CD4-positive, alpha-beta T cell (primary cell): ENCODE measurements at regions of chr1 and their contacts with region 1.

Region 1: DNA sequence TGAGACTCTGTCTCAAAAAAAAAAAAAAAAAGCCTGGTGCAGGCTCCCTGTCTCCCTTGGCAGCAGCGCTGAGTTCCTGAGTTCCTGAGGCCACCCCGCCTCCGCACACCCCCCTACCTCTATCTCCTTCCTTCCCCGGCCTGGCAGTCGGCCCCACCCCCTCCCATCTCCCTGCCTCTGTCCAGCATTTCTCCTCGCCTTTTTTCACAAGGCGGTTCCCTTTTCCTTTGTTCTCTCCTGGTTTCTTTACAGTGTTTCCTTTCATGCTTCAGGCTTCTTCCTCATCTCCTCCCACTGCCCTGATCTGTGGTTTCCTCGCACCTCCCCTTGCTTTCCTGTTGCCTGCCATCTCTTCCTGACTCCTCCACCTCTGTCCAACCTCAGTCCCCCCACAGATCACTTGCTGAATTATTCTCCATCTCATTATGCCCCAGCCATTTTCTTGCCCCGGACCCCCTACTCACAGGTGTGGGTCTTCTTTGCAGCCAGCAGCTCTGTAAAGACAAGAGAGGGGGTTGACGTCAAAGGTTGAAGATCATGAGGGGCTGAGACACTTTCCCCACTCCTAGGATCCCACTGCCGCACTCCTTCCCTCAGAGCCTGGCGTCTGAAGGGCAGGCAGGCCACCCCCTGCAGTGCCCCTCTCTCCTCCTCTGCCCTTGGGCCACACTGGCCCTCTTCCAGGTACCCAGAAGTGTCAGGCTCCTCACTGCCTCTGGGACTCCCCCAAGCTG is 2.5 kb downstream of the RORC start:
- DNase-seq: peak in 1 of 14 experiments; percentile 37
- ATAC-seq: no peak
- H3K4me3 ChIP-seq: no peak overlapping the region
- H3K4me3 Mint-ChIP-seq: peak overlapping the region; percentile 59
- H3K27ac ChIP-seq: peak overlapping the region; percentile 25 to 42
- H3K27ac Mint-ChIP-seq: peak overlapping the region; percentile 79
- H3K4me1 ChIP-seq: peaks cover 99% of the 10 kb centered on the region
- H3K4me1 Mint-ChIP-seq: peaks cover 88% of the 10 kb centered on the region
- H3K27me3 ChIP-seq: no peaks in the 10 kb centered on the region
- H3K27me3 Mint-ChIP-seq: no peaks in the 10 kb centered on the region
- CTCF ChIP-seq: no peak

Region 2: DNA sequence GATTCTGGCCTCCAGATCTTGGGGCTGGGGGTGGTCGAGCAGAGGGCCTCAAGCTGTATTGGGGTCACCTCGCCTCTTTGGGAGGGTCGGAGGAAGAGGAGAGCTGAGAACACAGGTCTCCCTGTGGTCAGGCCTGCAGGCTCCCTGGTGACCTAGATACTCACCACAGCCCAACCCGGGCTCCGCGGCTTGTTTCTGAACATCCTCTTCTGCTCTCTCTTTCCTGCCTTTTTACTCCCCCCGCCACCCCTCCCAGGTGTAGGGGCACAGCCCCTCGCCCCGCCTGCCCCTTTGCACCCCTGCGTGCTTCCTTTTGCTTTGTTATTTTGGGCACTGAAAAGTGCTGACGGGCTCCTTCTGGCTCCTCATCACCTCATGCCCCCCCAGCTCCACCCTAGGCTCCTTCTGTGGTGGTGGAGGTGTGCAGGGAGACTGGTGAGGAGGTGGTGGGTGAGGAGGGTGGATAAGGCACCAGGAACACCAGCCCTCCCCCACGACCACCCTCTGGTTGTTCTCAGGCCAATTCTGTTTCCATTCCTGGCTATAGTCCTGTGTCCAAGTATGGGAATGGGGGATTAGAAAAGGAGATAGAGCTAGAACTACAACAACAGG is 13.3 kb before region 1 on chr1:
- CTCF ChIA-PET with region 1: interaction called, 5 read pairs
- POLR2A ChIA-PET with region 1: interaction called, 14 read pairs
- intact Hi-C with region 1: no loop called
- DNase-seq: peak in 11 of 14 experiments; percentile 25 to 87 (median 49)
- ATAC-seq: peak; percentile 86
- H3K4me3 ChIP-seq: no peak overlapping the region
- H3K4me3 Mint-ChIP-seq: peak overlapping the region; percentile 34
- H3K27ac ChIP-seq: peak overlapping the region in 1 of 2 donors; percentile 23
- H3K27ac Mint-ChIP-seq: peak overlapping the region; percentile 81
- H3K4me1 ChIP-seq: peaks cover 87% of the 10 kb centered on the region
- H3K4me1 Mint-ChIP-seq: peaks cover 68% of the 10 kb centered on the region
- H3K27me3 ChIP-seq: no peaks in the 10 kb centered on the region
- H3K27me3 Mint-ChIP-seq: no peaks in the 10 kb centered on the region
- CTCF ChIP-seq: no peak